H1 (cell line): ENCODE measurements at regions of chr16 and their contacts with region 1.

Region 1: GRCh38 chr16:788394-789126 is at the start of gene CHTF18:
- DNase-seq: peak; percentile 54 to 93
- H3K4me3 ChIP-seq: peak within 1 kb of the TSS; percentile 76 to 98 (median 84)
- H3K27ac ChIP-seq: peak within 1 kb of the TSS; percentile 58; the same call in 1 of the 2 replicates
- H3K4me1 ChIP-seq: peaks cover 0 to 14% (median 6%) of the 10 kb centered on the region in 4 experiments; a peak in 4 of 7 replicates
- H3K27me3 ChIP-seq: no peaks in the 10 kb centered on the region
- CTCF ChIP-seq: no peak
- EP300 ChIP-seq: no peak
- POLR2A ChIP-seq: no peak; a peak in 1 of 3 replicates
- RAD21 ChIP-seq: no peak
- total RNA-seq, gene CHTF18: 98.3 and 104 TPM in 2 replicates

Region 2: DNA sequence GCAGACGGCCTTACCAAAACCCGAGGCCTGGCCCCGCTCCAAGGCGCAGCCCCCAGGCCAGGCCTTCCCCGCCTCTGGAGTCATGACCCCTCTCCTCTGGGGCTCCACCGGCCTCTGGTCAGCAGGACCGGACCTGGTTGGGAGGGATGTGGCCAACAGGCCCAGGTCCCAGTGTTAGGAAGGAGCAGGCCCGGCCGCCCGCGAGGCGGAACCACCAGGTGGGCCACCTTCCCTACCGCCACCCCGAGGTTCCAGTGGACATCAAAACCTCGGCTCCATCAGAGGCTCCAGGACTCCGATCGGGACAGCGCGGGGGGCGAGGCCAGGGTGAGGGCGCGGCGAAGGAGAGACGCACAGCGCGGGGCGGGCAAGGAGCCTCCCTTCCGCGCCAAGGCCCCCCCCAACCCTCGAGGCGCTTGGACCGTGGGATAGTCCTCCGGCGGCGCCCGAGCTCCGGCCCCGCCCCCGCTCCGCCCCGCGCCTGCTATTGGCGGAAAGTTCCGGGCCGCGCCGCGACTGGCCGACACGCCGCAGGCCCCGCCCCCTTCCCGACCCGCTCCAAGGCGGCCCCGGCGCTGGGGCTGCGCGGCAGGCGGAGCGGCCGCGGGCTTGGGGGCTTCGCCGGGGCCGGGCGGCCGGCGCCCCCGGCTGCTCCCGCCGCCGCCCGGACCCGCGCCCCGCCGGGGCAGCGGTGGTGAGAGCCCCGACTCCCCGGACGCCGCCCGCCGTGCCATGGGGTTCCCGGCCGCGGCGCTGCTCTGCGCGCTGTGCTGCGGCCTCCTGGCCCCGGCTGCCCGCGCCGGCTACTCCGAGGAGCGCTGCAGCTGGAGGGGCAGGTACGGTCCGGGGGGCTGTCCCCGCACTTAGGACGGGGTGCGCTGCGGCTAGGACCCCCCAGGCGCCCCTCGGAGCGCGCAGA is 73.7 kb before region 1 on chr16 and contains the start of gene METRN:
- CTCF ChIA-PET with region 1: interaction called, 424 read pairs
- POLR2A ChIA-PET with region 1: interaction called, 24 read pairs
- DNase-seq: peak in 1 of 2 experiments; percentile 95
- H3K4me3 ChIP-seq: peak within 1 kb of the TSS; percentile 41 to 74 (median 44); a peak in 7 of 8 replicates
- H3K27ac ChIP-seq: no peak within 1 kb of the TSS
- H3K4me1 ChIP-seq: peaks cover 0 to 23% (median 16%) of the 10 kb centered on the region in 4 experiments; a peak in 5 of 7 replicates
- H3K27me3 ChIP-seq: peaks cover 0 to 51% (median 27%) of the 10 kb centered on the region in 4 experiments; a peak in 6 of 7 replicates
- CTCF ChIP-seq: no peak
- EP300 ChIP-seq: no peak
- POLR2A ChIP-seq: no peak
- RAD21 ChIP-seq: no peak
- total RNA-seq, gene METRN: 18.7 and 19.1 TPM in 2 replicates

Region 3: DNA sequence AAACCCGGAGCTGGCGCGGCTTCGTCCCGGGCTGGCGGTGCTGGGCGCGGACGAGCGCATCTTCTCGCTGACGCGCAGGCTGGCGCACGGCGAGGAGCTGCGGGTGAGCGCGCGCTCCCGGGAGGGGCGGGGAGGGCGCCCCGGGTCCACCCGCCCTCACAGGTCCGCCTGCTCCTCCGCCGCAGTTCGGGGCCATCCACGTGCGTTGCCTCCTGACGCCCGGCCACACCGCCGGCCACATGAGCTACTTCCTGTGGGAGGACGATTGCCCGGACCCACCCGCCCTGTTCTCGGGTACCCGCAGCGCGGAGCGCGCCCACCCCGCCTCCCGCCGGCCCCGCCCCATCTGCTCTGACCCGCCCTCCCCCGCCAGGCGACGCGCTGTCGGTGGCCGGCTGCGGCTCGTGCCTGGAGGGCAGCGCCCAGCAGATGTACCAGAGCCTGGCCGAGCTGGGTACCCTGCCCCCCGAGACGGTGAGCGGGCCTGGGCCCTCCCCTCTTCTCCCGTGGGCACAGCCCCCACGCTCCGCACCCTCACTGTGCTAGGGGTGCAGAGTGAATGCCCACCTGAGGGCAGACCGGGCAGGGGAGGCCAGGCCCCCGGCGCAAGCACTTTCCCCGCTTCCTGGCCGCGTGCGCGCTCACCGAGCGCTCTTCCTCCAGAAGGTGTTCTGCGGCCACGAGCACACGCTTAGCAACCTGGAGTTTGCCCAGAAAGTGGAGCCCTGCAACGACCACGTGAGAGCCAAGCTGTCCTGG is 60.2 kb before region 1 on chr16:
- CTCF ChIA-PET with region 1: interaction called, 424 read pairs
- POLR2A ChIA-PET with region 1: interaction called, 14 read pairs
- DNase-seq: no peak
- H3K4me3 ChIP-seq: peak overlapping the region; percentile 24 to 83 (median 37)
- H3K27ac ChIP-seq: no peak overlapping the region; the same call in 1 of the 2 replicates
- H3K4me1 ChIP-seq: peaks cover 0 to 14% (median 8%) of the 10 kb centered on the region in 4 experiments; a peak in 5 of 7 replicates
- H3K27me3 ChIP-seq: peaks cover 0 to 16% (median 5%) of the 10 kb centered on the region in 4 experiments; a peak in 4 of 7 replicates
- CTCF ChIP-seq: no peak
- EP300 ChIP-seq: no peak
- POLR2A ChIP-seq: 0 out of 3 replicates have a peak, but pooled peaks of 1 of the 2 experiments have one; percentile 15
- RAD21 ChIP-seq: no peak

Region 4: DNA sequence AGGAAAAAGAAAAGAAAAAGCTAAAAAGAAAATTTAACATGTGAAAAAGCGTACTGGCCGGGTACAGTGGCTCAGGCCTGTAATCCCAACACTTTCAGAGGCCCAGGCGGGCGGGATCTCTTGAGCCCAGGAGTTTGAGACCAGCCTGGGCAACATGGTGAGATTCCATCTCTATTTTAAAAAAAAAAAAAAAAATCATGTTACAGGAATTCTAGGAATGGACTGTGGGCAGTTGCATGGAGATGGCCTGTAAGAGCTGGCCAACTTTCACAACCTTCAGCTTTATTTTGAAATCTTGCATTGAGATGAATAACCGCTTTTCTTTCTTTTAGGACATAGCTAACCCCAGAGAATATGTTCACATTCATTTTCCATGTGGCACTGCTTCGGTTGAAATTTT is 39.6 kb before region 1 on chr16:
- CTCF ChIA-PET with region 1: interaction called, 144 read pairs
- POLR2A ChIA-PET with region 1: interaction called, 18 read pairs
- DNase-seq: no peak
- H3K4me3 ChIP-seq: no peak overlapping the region
- H3K27ac ChIP-seq: no peak overlapping the region
- H3K4me1 ChIP-seq: peaks cover 3 to 12% (median 5%) of the 10 kb centered on the region in 4 experiments; a peak in 5 of 7 replicates
- H3K27me3 ChIP-seq: no peaks in the 10 kb centered on the region
- CTCF ChIP-seq: no peak
- EP300 ChIP-seq: no peak
- POLR2A ChIP-seq: no peak
- RAD21 ChIP-seq: no peak

Region 5: GRCh38 chr16:774086-775001 is 14.2 kb before region 1 on chr16:
- CTCF ChIA-PET with region 1: interaction called, 35 read pairs
- POLR2A ChIA-PET with region 1: interaction called, 7 read pairs
- DNase-seq: no peak
- H3K4me3 ChIP-seq: no peak overlapping the region
- H3K27ac ChIP-seq: no peak overlapping the region
- H3K4me1 ChIP-seq: peaks cover 0 to 1% (median under 1%) of the 10 kb centered on the region in 4 experiments; a peak in 2 of 7 replicates
- H3K27me3 ChIP-seq: peaks cover 0 to under 1% (median 0%) of the 10 kb centered on the region in 4 experiments; a peak in 2 of 7 replicates
- CTCF ChIP-seq: no peak
- EP300 ChIP-seq: no peak
- POLR2A ChIP-seq: no peak
- RAD21 ChIP-seq: no peak

Region 6: GRCh38 chr16:931626-932500 is 143.3 kb after region 1 on chr16:
- CTCF ChIA-PET with region 1: no interaction called
- POLR2A ChIA-PET with region 1: no interaction called
- DNase-seq: no peak
- H3K4me3 ChIP-seq: no peak overlapping the region
- H3K27ac ChIP-seq: no peak overlapping the region
- H3K4me1 ChIP-seq: peaks cover 0 to 6% (median 3%) of the 10 kb centered on the region in 4 experiments; a peak in 3 of 7 replicates
- H3K27me3 ChIP-seq: no peaks in the 10 kb centered on the region
- CTCF ChIP-seq: no peak
- EP300 ChIP-seq: no peak
- POLR2A ChIP-seq: no peak
- RAD21 ChIP-seq: no peak